Uterus (tissue), 4 donors: ENCODE measurements at regions of chr7 and their contacts with region 1.

Region 1: DNA sequence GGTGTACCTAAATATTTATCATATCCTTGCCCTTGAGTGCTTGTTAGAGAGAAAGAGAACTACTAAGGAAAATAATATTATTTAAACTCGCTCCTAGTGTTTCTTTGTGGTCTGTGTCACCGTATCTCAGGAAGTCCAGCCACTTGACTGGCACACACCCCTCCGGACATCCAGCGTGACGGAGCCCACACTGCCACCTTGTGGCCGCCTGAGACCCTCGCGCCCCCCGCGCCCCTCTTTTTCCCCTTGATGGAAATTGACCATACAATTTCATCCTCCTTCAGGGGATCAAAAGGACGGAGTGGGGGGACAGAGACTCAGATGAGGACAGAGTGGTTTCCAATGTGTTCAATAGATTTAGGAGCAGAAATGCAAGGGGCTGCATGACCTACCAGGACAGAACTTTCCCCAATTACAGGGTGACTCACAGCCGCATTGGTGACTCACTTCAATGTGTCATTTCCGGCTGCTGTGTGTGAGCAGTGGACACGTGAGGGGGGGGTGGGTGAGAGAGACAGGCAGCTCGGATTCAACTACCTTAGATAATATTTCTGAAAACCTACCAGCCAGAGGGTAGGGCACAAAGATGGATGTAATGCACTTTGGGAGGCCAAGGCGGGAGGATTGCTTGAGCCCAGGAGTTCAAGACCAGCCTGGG is 11.4 kb downstream of the SERPINE1 start:
- DNase-seq: peak; percentile 86 to 96
- H3K4me3 ChIP-seq: no peak overlapping the region
- H3K27ac ChIP-seq: peak overlapping the region; percentile 58 to 84
- H3K4me1 ChIP-seq: no peaks in the 10 kb centered on the region
- H3K27me3 ChIP-seq: no peaks in the 10 kb centered on the region
- CTCF ChIP-seq: peak; percentile 69 to 90 (median 82)
- POLR2A ChIP-seq: peak in 1 of 2 donors; percentile 39

Region 2: DNA sequence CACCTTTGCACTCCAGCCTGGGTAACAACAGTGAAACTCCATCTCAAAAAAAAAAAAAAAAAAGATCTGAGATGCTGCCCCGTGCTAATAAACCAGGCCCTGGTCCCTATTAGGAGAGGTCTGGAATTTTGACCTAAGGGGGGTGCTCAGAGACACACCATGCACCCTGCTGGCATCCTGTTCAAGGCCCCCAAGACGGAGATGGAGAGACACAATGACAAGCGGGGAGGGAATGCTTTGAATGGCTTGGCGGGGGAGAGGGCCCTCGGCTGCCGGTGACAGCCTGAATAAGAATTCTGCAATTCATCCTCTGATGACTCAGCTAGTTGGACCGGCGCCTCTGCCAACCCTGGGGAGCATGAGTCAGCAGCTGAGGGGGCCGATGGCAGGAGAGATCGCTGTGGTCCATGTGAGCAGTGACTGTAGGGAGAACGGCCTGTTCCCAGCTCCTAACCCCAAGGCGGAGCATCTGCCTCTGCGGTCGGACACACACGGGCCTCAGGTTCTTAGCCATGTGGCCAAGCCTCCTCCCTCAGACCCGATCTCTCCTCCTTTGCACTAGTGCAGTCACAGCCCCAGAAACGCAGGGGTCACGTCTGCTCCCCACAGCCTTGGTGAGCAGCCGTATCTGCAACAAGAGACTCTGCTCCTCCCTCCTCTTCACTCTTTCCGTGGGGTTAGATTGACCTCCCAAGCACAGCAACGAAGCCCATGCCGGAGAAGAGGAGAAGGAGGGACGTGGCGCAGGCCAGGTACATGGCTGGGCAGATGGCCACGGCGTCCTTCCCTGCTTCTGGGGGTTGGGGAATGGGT is 38.2 kb before region 1 on chr7:
- intact Hi-C with region 1: loop called (anchors 5 kb)
- DNase-seq: peak; percentile 98
- H3K4me3 ChIP-seq: no peak overlapping the region
- H3K27ac ChIP-seq: peak overlapping the region; percentile 76 to 78
- H3K4me1 ChIP-seq: peaks cover 0 to 6% of the 10 kb centered on the region in 2 donors
- H3K27me3 ChIP-seq: no peaks in the 10 kb centered on the region
- CTCF ChIP-seq: no peak
- POLR2A ChIP-seq: peak in 1 of 2 donors; percentile 27

Region 3: GRCh38 chr7:101217388-101218235 is 79.3 kb after region 1 on chr7 and contains the starts of genes PLOD3 and ZNHIT1:
- intact Hi-C with region 1: no loop called
- DNase-seq: peak; percentile 95 to 98
- H3K4me3 ChIP-seq: peak within 1 kb of the TSS; percentile 68 to 72
- H3K27ac ChIP-seq: peak within 1 kb of the TSS; percentile 91 to 93
- H3K4me1 ChIP-seq: peaks cover 0 to 12% of the 10 kb centered on the region in 2 donors
- H3K27me3 ChIP-seq: no peaks in the 10 kb centered on the region
- CTCF ChIP-seq: peak; percentile 3 to 34 (median 16)
- POLR2A ChIP-seq: peak; percentile 9 to 33
- total RNA-seq, gene PLOD3: 29.2 to 75.4 (median 34.1) TPM
- total RNA-seq, gene ZNHIT1: 40.7 to 53.3 (median 52.0) TPM